Activated CD8-positive, alpha-beta T cell treated with anti-CD3 and anti-CD28 coated beads for 36 hours (primary cell): ENCODE measurements at regions of chr3 and their contacts with region 1.

Region 1: GRCh38 chr3:64533617-64534317 is 154.0 kb downstream of the ADAMTS9 start:
- DNase-seq: peak; percentile 71
- ATAC-seq: peak; percentile 89
- H3K4me3 Mint-ChIP-seq: no peak overlapping the region
- H3K27ac Mint-ChIP-seq: no peak overlapping the region
- H3K4me1 Mint-ChIP-seq: no peaks in the 10 kb centered on the region
- H3K27me3 Mint-ChIP-seq: peaks cover 19% of the 10 kb centered on the region
- CTCF ChIP-seq: peak; percentile 63

Region 2: DNA sequence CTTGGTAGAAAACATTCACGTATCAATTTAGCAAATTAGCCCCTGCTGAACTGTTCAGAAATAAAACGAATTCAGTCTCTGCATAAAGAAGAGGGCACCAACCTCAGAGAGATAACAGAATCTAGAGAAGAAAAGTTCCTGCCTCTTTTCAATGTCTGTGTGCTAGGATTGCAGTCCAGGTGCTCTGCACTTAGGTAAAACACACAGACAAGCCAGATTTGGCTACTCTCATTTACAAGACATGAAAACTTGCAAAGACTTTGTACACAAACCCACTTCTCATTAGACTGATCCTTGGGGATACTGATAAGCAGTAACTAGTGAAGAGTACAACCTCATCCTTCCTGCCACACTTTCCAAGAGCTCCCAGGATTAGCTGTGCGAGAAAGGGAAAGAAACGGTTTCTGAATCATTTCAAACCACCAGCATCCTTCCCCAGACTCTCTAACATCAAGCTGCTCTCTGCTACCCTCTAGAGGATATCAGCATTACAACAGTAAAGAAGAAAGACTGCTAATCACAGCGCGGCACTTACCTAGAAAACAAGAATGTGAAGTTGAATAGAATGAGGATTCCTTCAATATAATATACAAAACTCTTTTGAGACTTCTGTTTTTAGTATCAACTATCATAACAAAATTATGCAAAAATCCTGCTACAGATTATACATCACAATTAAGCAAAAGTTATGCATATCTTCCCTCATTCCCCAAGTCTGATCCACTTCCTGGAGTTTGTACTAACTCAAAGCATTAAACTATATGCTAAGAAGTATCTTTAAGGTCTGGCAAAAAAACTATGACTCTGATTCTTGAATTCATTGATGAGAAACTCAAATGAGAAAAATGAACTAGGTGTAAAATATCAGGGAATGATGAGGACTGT is 1198.5 kb after region 1 on chr3:
- CTCF ChIA-PET with region 1: interaction called, 8 read pairs
- POLR2A ChIA-PET with region 1: no interaction called
- intact Hi-C with region 1: loop called (anchors 5 kb)
- DNase-seq: peak; percentile 2
- ATAC-seq: peak; percentile 64
- H3K4me3 Mint-ChIP-seq: no peak overlapping the region
- H3K27ac Mint-ChIP-seq: no peak overlapping the region
- H3K4me1 Mint-ChIP-seq: no peaks in the 10 kb centered on the region
- H3K27me3 Mint-ChIP-seq: peaks cover 6% of the 10 kb centered on the region
- CTCF ChIP-seq: peak; percentile 72